ENCODE measurements at regions of chr6 and their contacts with region 1.

Region 1: DNA sequence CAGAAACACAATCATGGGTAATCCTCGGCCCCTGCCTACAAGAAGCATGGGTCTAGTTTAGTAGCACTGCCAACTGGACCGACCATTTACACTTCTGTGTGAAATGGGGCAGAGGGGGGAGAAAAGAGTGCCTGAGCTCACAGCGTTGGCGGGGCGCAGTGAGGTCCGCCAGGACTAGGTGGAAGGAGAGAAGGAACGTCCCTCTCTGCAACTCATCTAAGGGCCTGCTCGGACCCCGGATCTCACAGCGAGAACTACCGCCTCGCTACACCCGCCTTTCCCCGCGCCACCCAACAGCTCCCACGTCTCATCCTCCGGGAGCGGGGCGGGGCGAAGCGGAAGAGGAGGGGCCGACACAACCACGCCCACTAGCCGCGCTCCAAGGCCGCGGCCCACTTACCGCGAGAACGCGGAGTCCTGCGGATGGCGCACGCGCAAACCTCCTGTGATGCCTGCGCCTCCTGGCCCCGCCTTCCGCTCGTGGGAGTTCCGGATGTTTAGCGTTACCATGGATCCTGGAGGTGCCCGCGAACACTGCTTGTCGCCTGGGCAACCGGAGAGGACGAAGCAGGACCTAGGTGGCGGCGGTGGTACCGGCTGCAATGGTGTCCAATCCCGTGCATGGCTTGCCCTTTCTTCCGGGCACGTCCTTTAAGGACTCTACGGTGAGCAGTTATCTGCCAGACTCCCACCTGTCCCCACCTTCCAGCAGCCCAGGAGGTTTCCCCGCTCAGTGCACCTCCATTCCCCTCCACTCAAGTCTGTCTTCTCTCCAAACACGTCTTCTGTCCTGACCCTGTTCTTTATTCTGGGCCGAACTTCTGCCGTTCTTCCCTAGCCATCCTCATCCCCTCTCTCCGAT is at the start of gene EFHC1:
- DNase-seq: peak; percentile 99
- ATAC-seq: peak; percentile 90
- H3K4me3 ChIP-seq: peak within 1 kb of the TSS; percentile 67 to 90 (median 86)
- H3K4me3 Mint-ChIP-seq: no peak within 1 kb of the TSS
- H3K27ac ChIP-seq: peak within 1 kb of the TSS; percentile 58 to 84
- H3K27ac Mint-ChIP-seq: no peak within 1 kb of the TSS
- H3K4me1 ChIP-seq: peaks cover 16 to 20% of the 10 kb centered on the region in 2 donors
- H3K4me1 Mint-ChIP-seq: peaks cover 11% of the 10 kb centered on the region
- H3K27me3 ChIP-seq: no peaks in the 10 kb centered on the region
- H3K27me3 Mint-ChIP-seq: peaks cover 1% of the 10 kb centered on the region
- CTCF ChIP-seq: no peak
- total RNA-seq, gene EFHC1: 34.8 and 45.7 TPM in 2 replicates

Region 2: DNA sequence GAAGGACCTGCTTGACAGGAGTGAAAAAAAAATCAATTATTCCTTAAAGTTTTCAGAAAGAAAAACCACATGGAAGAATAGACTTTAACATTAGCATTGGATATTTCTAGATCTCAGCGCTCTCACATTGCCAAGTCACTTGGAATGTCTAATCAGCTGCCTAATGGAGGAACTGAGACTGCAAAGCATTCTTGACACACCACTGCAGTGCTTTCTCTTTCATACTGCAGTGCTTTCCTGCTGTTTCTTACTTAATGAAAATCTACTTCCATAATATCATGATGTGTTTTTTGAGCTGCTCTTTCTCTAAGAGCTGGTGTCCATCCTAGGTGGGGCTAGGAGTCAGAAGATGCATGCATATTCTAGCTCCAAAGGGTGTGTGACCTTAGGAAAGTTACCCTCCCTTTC is 115.1 kb before region 1 on chr6:
- CTCF ChIA-PET with region 1: no interaction called
- POLR2A ChIA-PET with region 1: no interaction called
- intact Hi-C with region 1: loop called (anchors 5 kb)
- DNase-seq: peak; percentile 73
- ATAC-seq: peak; percentile 44
- H3K4me3 ChIP-seq: peak overlapping the region in 4 of 5 experiments; percentile 0 to 44 (median 20)
- H3K4me3 Mint-ChIP-seq: peak overlapping the region; percentile 80
- H3K27ac ChIP-seq: peak overlapping the region; percentile 92 to 94
- H3K27ac Mint-ChIP-seq: peak overlapping the region; percentile 93
- H3K4me1 ChIP-seq: peaks cover 59 to 65% of the 10 kb centered on the region in 2 donors
- H3K4me1 Mint-ChIP-seq: peaks cover 62% of the 10 kb centered on the region
- H3K27me3 ChIP-seq: no peaks in the 10 kb centered on the region
- H3K27me3 Mint-ChIP-seq: no peaks in the 10 kb centered on the region
- CTCF ChIP-seq: no peak

Region 3: DNA sequence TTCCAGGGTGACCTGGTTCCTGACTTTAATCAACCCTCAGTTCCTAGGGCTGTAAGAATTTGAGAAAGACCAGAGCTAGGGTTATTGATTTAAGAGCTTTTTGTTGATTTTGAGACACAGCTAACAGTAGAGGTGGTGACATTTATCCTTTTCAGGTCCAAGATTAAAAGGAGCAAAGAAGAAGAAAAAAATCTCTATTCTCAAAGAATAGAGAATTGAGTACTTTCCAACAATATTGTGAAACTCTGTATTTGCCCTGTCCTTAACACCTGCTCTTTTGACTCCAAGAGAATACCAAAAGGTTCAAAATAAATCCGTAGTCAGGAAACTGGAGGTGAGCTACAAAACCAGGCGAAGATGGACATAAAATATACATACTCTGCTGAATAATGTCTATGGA is 50.8 kb before region 1 on chr6:
- CTCF ChIA-PET with region 1: no interaction called
- POLR2A ChIA-PET with region 1: no interaction called
- intact Hi-C with region 1: no loop called
- DNase-seq: no peak
- ATAC-seq: no peak
- H3K4me3 ChIP-seq: no peak overlapping the region
- H3K4me3 Mint-ChIP-seq: no peak overlapping the region
- H3K27ac ChIP-seq: no peak overlapping the region
- H3K27ac Mint-ChIP-seq: no peak overlapping the region
- H3K4me1 ChIP-seq: no peaks in the 10 kb centered on the region
- H3K4me1 Mint-ChIP-seq: peaks cover 2% of the 10 kb centered on the region
- H3K27me3 ChIP-seq: no peaks in the 10 kb centered on the region
- H3K27me3 Mint-ChIP-seq: no peaks in the 10 kb centered on the region
- CTCF ChIP-seq: no peak

Region 4: GRCh38 chr6:52475307-52475706 is 55.3 kb after region 1 on chr6:
- CTCF ChIA-PET with region 1: no interaction called
- POLR2A ChIA-PET with region 1: no interaction called
- intact Hi-C with region 1: no loop called
- DNase-seq: no peak
- ATAC-seq: no peak
- H3K4me3 ChIP-seq: no peak overlapping the region
- H3K4me3 Mint-ChIP-seq: no peak overlapping the region
- H3K27ac ChIP-seq: no peak overlapping the region
- H3K27ac Mint-ChIP-seq: no peak overlapping the region
- H3K4me1 ChIP-seq: no peaks in the 10 kb centered on the region
- H3K4me1 Mint-ChIP-seq: peaks cover 1% of the 10 kb centered on the region
- H3K27me3 ChIP-seq: no peaks in the 10 kb centered on the region
- H3K27me3 Mint-ChIP-seq: no peaks in the 10 kb centered on the region
- CTCF ChIP-seq: no peak

Region 5: DNA sequence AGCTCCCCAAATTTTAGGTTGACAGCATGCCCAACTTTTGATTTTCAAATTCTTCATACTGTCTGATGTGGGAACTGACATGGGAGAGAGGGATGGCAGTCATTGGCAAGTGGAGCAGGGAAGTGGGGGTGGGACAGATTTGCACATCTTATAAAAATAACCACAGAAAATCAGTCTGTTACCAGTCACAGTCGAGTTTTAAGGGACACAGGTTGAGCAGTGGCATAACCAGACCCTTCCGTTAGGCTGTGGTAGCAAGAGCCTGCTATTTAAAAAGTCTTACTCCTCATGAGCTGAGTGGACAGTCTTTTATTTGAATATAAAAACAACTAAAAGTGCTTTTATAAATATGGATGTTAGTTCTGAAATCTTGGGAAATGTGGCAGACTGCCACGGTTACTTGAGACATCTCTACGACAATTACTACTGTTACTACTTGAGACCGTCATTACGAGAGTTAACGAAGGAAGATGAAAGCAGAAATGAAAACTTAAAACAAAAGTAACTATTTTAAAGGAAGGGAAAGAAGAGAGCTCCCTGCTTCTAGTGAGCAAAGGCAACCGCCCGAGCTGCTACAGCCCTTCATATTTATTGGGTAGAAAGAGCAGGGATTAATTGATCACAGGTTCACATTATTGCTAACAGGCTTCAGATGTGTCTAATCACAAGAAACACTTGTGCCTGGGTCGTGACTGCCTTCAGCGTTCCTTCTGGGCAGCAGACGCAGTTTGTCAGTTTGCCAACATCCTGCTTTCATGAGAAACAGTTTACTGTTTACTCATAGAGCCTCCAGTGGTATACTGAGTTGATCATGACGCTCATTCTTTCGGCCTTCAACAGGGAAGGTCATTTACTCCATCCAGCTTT is 71.4 kb after region 1 on chr6:
- CTCF ChIA-PET with region 1: interaction called, 38 read pairs
- POLR2A ChIA-PET with region 1: interaction called, 5 read pairs
- intact Hi-C with region 1: loop called (anchors 1 kb)
- DNase-seq: peak; percentile 65
- ATAC-seq: peak; percentile 59
- H3K4me3 ChIP-seq: peak overlapping the region in 3 of 5 experiments; percentile 3 to 33 (median 27)
- H3K4me3 Mint-ChIP-seq: peak overlapping the region; percentile 79
- H3K27ac ChIP-seq: peak overlapping the region; percentile 72 to 83
- H3K27ac Mint-ChIP-seq: peak overlapping the region; percentile 86
- H3K4me1 ChIP-seq: peaks cover 29 to 62% of the 10 kb centered on the region in 2 donors
- H3K4me1 Mint-ChIP-seq: peaks cover 61% of the 10 kb centered on the region
- H3K27me3 ChIP-seq: no peaks in the 10 kb centered on the region
- H3K27me3 Mint-ChIP-seq: no peaks in the 10 kb centered on the region
- CTCF ChIP-seq: no peak

Region 6: GRCh38 chr6:52505726-52506409 is 85.8 kb after region 1 on chr6:
- CTCF ChIA-PET with region 1: interaction called, 38 read pairs
- POLR2A ChIA-PET with region 1: interaction called, 3 read pairs
- intact Hi-C with region 1: loop called (anchors 1 kb)
- DNase-seq: peak; percentile 39
- ATAC-seq: peak; percentile 46
- H3K4me3 ChIP-seq: no peak overlapping the region
- H3K4me3 Mint-ChIP-seq: no peak overlapping the region
- H3K27ac ChIP-seq: no peak overlapping the region
- H3K27ac Mint-ChIP-seq: no peak overlapping the region
- H3K4me1 ChIP-seq: peaks cover 0 to 9% of the 10 kb centered on the region in 2 donors
- H3K4me1 Mint-ChIP-seq: peaks cover 2% of the 10 kb centered on the region
- H3K27me3 ChIP-seq: no peaks in the 10 kb centered on the region
- H3K27me3 Mint-ChIP-seq: no peaks in the 10 kb centered on the region
- CTCF ChIP-seq: peak; percentile 53

Region 7: GRCh38 chr6:52598123-52598823 is 178.2 kb after region 1 on chr6:
- CTCF ChIA-PET with region 1: interaction called, 52 read pairs
- POLR2A ChIA-PET with region 1: no interaction called
- intact Hi-C with region 1: loop called (anchors 1 kb)
- DNase-seq: peak; percentile 52
- ATAC-seq: peak; percentile 43
- H3K4me3 ChIP-seq: no peak overlapping the region
- H3K4me3 Mint-ChIP-seq: no peak overlapping the region
- H3K27ac ChIP-seq: no peak overlapping the region
- H3K27ac Mint-ChIP-seq: no peak overlapping the region
- H3K4me1 ChIP-seq: peaks cover 6 to 26% of the 10 kb centered on the region in 2 donors
- H3K4me1 Mint-ChIP-seq: peaks cover 19% of the 10 kb centered on the region
- H3K27me3 ChIP-seq: no peaks in the 10 kb centered on the region
- H3K27me3 Mint-ChIP-seq: peaks cover 5% of the 10 kb centered on the region
- CTCF ChIP-seq: peak; percentile 36

Region 8: GRCh38 chr6:52664186-52664990 is 244.3 kb after region 1 on chr6:
- CTCF ChIA-PET with region 1: interaction called, 75 read pairs
- POLR2A ChIA-PET with region 1: interaction called, 3 read pairs
- intact Hi-C with region 1: loop called (anchors 1 kb)
- DNase-seq: peak; percentile 80
- ATAC-seq: peak; percentile 86
- H3K4me3 ChIP-seq: peak overlapping the region; percentile 58 to 83 (median 70)
- H3K4me3 Mint-ChIP-seq: no peak overlapping the region
- H3K27ac ChIP-seq: peak overlapping the region in 1 of 2 donors; percentile 16
- H3K27ac Mint-ChIP-seq: no peak overlapping the region
- H3K4me1 ChIP-seq: peaks cover 18 to 20% of the 10 kb centered on the region in 2 donors
- H3K4me1 Mint-ChIP-seq: peaks cover 12% of the 10 kb centered on the region
- H3K27me3 ChIP-seq: peaks cover 0 to 7% (median 0%) of the 10 kb centered on the region in 4 experiments
- H3K27me3 Mint-ChIP-seq: no peaks in the 10 kb centered on the region
- CTCF ChIP-seq: no peak